T-cell (primary cell): ENCODE measurements at regions of chr14 and their contacts with region 1.

Region 1: GRCh38 chr14:102092771-102093170 is 5.9 kb upstream of the HSP90AA1 start:
- DNase-seq: no peak
- ATAC-seq: no peak
- H3K4me3 ChIP-seq: no peak overlapping the region
- H3K4me3 Mint-ChIP-seq: no peak overlapping the region
- H3K27ac ChIP-seq: no peak overlapping the region
- H3K27ac Mint-ChIP-seq: no peak overlapping the region
- H3K4me1 ChIP-seq: peaks cover 2 to 19% of the 10 kb centered on the region in 2 experiments
- H3K4me1 Mint-ChIP-seq: peaks cover 23 to 25% (median 25%) of the 10 kb centered on the region in 3 donors
- H3K27me3 ChIP-seq: no peaks in the 10 kb centered on the region
- H3K27me3 Mint-ChIP-seq: no peaks in the 10 kb centered on the region

Region 2: DNA sequence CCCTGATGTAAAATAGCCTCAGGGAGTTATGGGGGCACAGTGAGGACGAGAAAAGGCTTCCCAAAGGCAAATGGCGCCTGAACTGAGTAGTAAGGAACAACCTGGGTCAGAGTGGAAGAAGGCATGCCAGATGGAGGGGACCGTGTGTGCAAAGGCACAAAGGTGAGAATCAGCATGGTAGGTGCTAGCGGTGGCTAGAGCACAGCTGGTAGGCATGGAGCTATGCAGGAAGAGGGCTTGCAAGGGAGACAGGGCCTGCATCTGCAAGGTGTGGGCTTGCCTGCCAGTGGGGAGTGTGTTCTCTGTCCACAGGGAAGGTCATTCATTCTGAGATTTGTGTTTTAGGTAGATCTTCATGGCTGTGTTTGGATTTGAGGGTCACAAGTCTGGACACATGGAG is 12.6 kb after region 1 on chr14:
- CTCF ChIA-PET with region 1: interaction called in 1 of 2 experiments, 11 read pairs
- POLR2A ChIA-PET with region 1: no interaction called
- DNase-seq: no peak
- ATAC-seq: no peak
- H3K4me3 ChIP-seq: no peak overlapping the region
- H3K4me3 Mint-ChIP-seq: no peak overlapping the region
- H3K27ac ChIP-seq: no peak overlapping the region
- H3K27ac Mint-ChIP-seq: no peak overlapping the region
- H3K4me1 ChIP-seq: no peaks in the 10 kb centered on the region
- H3K4me1 Mint-ChIP-seq: no peaks in the 10 kb centered on the region
- H3K27me3 ChIP-seq: peaks cover 0 to 6% of the 10 kb centered on the region in 2 experiments
- H3K27me3 Mint-ChIP-seq: no peaks in the 10 kb centered on the region